Activated T-helper 2 cell treated with anti-CD3 and anti-CD28 coated beads, Interferon-gamma antibody, Interleukin-2, Interleukin-4, amounts not matched to agents 10 μg/mL and 5 μg/mL and 100 μg/mL, durations not matched to agents 14 hours and 24 hours and 36 hours (primary cell): ENCODE measurements at regions of chr4 and their contacts with region 1.

Region 1: DNA sequence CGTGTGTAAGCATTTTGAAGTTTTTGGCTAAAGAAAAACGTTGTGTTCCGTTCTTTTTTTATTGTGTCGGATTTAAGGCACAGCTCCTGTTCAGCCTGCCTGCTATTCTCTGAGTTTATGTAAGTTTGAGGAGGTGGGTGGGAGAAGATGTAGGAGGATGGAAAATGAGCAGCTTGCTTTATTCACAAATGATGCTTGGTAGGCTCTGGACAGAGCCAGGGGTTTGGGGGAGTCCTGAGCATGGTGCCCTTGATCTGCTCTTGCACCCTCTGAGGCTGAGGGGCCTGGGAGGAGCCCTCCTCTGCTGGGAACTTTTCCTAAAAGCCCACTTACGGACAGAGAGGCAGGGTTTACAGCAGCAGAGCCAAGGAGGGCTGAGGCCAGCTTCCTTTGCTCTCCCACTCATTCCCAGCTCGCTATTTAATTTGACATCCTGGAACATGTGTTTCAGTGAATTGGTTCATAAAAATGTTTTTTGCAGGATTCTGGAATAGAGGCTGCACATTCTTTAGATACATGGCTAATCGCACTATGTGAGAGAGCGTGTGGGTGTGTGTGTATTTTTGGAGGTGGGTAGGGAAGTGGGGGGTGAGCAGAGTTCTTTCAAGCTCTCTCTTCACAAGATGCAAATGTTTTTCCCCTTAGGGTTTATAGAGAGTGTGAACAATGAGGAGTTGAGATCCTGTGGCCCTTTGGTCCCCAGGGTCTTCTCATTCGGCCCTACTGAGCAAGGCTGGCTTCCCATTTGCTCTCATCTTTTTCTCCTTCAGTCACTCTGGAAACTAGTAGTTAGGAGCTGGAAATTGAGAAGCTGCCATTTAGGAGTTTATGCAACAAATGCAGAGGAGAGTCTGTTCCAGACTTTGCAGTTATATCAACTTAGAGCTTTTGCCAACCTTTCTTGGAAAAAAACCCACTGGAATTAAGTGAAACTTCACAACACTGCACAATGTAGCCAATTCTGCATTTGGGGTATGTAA is 32.1 kb downstream of the TMEM131L start:
- DNase-seq: no peak
- H3K4me3 Mint-ChIP-seq: peak overlapping the region; percentile 70
- H3K27ac Mint-ChIP-seq: peak overlapping the region; percentile 89
- H3K4me1 Mint-ChIP-seq: peaks cover 80% of the 10 kb centered on the region
- H3K27me3 Mint-ChIP-seq: no peaks in the 10 kb centered on the region

Region 2: GRCh38 chr4:153521999-153522801 is 23.9 kb after region 1 on chr4:
- intact Hi-C with region 1: loop called (anchors 1 kb)
- DNase-seq: peak; percentile 60
- H3K4me3 Mint-ChIP-seq: peak overlapping the region; percentile 71
- H3K27ac Mint-ChIP-seq: peak overlapping the region; percentile 98
- H3K4me1 Mint-ChIP-seq: peaks cover 87% of the 10 kb centered on the region
- H3K27me3 Mint-ChIP-seq: no peaks in the 10 kb centered on the region

Region 3: DNA sequence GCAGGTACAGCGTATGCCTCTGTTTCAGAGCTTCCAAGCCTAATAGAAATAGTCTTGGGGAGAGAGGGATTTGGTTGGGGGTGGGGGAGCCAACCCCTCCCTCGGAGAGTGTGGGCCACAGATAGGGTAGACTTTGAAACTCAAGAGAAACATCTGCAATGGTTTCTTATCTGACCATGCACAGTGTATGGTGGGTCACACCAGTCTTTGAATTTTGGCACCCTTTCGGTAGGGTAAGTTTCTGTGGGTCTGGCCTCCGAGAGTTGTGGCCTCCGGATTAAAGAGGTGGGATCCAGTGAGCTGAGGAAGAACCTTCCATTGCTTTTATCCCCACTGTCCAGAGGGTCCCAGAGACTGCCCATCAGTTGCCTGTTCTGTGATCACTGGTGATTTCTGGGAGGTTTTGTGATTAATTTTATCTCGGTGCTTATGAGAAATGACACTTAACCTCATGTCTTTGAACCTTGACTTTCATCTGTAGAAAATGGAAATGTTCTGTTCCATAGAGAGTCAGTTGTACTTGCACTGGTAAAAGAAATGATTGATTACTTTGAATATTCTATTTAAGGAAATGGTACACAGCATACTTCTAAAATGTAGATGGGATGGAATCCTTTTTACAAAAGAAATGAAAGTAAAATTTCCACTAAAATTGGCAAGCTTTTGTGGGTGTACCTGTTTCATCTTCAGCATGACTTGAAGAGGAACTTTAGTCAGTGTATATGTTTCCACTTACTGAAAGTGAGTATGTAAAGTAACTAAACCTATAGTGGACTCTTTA is 30.6 kb after region 1 on chr4:
- intact Hi-C with region 1: loop called (anchors 1 kb)
- DNase-seq: no peak
- H3K4me3 Mint-ChIP-seq: peak overlapping the region; percentile 71
- H3K27ac Mint-ChIP-seq: peak overlapping the region; percentile 91
- H3K4me1 Mint-ChIP-seq: peaks cover 74% of the 10 kb centered on the region
- H3K27me3 Mint-ChIP-seq: no peaks in the 10 kb centered on the region

Region 4: DNA sequence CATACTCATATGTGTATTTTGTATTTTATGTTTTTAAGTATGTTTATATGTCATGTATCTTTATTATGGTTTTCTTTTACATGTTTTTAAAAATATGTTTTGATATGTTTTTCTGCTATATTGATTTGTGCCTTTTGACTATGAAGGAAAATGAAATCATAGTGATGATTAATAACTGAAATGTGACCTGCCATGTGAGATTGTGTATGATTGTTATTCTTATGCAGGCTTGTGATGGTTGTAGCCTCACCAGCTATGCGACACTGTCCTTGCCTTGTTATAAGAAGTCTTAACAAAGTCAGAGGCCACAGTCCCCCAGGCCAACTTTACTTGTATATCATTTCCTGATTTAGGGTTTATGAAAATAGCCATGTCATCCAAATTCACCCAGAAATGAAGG is 51.1 kb after region 1 on chr4:
- intact Hi-C with region 1: loop called (anchors 2 kb)
- DNase-seq: no peak
- H3K4me3 Mint-ChIP-seq: no peak overlapping the region
- H3K27ac Mint-ChIP-seq: peak overlapping the region; percentile 51
- H3K4me1 Mint-ChIP-seq: peaks cover 23% of the 10 kb centered on the region
- H3K27me3 Mint-ChIP-seq: no peaks in the 10 kb centered on the region